Left ventricle myocardium superior (tissue), 1 donor: ENCODE measurements at regions of chr11 and their contacts with region 1.

Region 1: DNA sequence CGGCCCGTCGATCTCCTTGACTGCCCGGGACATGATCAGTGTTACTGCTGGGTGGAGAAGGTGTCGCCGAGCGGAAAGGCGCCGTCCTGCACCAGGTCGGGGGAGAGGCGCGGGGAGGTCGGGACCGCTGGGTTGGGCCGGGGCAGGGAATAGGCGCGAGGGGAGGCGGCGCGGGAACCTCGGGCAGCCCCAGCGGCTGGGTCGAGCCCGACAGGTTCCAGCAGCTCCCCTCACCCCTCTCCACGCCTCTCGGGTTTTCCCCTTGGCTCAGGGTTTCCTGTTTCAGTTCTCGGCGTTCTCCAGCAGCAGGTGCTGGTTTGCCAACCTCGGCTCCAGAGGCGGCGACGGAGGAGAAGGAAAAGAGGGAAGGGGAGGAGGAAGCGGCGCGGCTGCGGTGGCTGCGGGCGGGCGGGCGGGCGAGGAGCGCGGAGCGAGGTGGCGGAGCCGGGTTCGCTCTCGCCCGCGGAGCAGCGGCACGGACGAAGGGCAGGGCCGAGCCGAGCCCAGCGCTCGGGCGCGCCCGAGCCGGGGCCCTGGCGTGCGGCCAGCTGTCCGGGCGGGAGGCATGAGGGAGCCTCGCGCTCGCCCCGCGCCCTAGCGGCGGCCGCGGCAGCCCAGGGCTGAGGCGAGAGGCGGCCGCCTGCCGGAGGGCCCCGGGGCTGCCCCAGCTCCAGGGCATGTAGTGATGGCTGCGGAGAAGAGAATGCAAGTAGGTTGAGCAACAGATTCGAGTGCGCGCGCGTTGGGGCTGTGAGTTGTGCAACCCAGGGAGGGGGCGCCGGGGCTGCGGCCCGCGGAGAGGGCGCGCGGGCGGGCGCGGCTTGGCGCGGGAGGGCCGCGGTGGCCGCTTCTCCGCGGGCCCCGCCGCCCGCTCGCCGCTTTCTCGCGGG is at the start of gene ZC3H12C:
- DNase-seq: peak; percentile 89
- ATAC-seq: peak; percentile 84
- total RNA-seq, gene ZC3H12C: 18.3 TPM

Region 2: GRCh38 chr11:109946322-109946846 is 146.4 kb before region 1 on chr11:
- intact Hi-C with region 1: loop called (anchors 5 kb)
- DNase-seq: peak; percentile 84
- ATAC-seq: peak; percentile 99

Region 3: DNA sequence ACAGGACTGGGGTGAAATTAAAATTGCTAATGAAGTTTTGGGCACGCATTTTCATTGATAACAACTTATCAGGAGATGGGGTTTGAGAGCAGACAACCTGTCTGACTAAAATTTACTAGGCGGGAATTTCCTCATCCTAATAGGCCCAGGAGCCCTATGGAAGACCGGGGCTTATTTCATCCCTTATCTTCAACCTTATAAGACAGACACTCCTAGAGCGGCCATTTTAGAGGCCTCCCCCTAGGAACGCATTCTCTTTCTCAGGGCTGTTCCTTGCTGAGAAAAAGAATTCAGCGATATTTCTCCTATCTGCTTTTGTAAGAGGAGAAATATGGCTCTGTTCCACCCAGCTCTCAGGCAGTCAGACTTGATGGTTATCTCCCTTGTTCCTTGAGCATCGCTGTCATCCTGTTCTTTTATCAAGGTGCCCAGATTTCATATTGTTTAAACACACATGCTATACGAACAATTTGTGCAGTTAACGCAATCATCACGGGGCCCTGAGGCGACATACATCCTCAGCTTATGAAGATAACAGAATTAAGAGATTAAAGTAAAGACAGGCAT is 38.8 kb before region 1 on chr11:
- intact Hi-C with region 1: no loop called
- DNase-seq: no peak
- ATAC-seq: no peak